Heart left ventricle (tissue), 16 donors: ENCODE measurements at regions of chr1 and their contacts with region 1.

Region 1: DNA sequence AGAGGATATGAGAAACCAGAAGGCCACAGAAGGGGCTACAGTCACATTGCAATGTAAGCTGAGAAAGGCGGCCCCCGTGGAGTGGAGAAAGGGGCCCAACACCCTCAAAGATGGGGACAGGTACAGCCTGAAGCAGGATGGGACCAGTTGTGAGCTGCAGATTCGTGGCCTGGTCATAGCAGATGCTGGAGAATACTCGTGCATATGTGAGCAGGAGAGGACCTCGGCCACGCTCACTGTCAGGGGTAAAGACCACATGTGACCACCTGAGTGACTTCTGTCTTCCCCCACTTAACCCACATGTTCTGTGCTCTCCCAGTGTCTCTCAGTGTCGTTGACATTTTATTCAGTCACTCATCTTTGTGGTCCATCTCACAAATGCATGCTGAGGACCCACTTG is 92.1 kb downstream of the OBSCN start:
- DNase-seq: peak in 3 of 5 donors; percentile 3 to 13 (median 4)
- ATAC-seq: no peak
- H3K4me3 ChIP-seq: no peak overlapping the region
- H3K27ac ChIP-seq: no peak overlapping the region
- H3K4me1 ChIP-seq: no peaks in the 10 kb centered on the region
- H3K27me3 ChIP-seq: no peaks in the 10 kb centered on the region
- CTCF ChIP-seq: no peak
- POLR2A ChIP-seq: no peak

Region 2: GRCh38 chr1:228241259-228241658 is 58.6 kb before region 1 on chr1:
- intact Hi-C with region 1: loop called in 1 of 10 experiments (anchors 2 kb)
- DNase-seq: no peak
- ATAC-seq: peak in 1 of 4 donors; percentile 10
- H3K4me3 ChIP-seq: no peak overlapping the region
- H3K27ac ChIP-seq: no peak overlapping the region
- H3K4me1 ChIP-seq: peaks cover 0 to 20% (median 0%) of the 10 kb centered on the region in 12 donors
- H3K27me3 ChIP-seq: no peaks in the 10 kb centered on the region
- CTCF ChIP-seq: no peak
- POLR2A ChIP-seq: no peak

Region 3: GRCh38 chr1:228393248-228393699 is 93.4 kb after region 1 on chr1:
- intact Hi-C with region 1: no loop called
- DNase-seq: peak in 4 of 5 donors; percentile 56 to 73 (median 69)
- ATAC-seq: peak; percentile 82 to 90 (median 86)
- H3K4me3 ChIP-seq: no peak overlapping the region
- H3K27ac ChIP-seq: peak overlapping the region in 7 of 12 donors; percentile 27 to 60 (median 50)
- H3K4me1 ChIP-seq: peaks cover 0 to 17% (median 10%) of the 10 kb centered on the region in 12 donors
- H3K27me3 ChIP-seq: no peaks in the 10 kb centered on the region
- CTCF ChIP-seq: peak; percentile 32 to 68 (median 54)
- POLR2A ChIP-seq: no peak

Region 4: DNA sequence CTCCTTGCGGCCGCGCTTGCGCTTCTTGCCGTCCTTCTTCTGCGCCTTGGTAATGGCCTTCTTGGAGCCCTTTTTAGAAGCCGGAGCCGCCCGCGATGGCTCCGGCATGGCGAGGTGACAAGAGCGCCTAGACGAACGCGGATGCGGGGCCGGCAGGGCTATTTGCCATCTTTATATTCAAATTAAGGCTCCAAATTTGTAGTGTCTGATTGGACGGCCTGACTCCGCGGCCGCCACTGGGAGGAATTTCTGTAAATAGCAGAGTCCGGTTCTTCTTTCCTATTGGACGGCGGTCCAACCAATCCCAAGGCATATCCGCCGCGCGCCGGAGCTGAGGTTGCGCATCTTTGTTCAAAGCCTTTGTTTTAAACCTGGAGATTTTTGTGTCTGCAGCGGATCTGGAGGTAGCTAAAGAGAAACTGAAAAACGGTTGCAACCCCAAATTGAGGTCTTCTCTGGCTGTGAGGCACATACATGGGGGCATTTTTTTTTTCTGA is 164.6 kb after region 1 on chr1:
- intact Hi-C with region 1: no loop called
- DNase-seq: peak; percentile 62 to 76 (median 72)
- ATAC-seq: peak; percentile 81 to 93 (median 90)
- H3K4me3 ChIP-seq: peak overlapping the region in 9 of 12 donors; percentile 29 to 51 (median 37)
- H3K27ac ChIP-seq: no peak overlapping the region
- H3K4me1 ChIP-seq: peaks cover 0 to 28% (median 7%) of the 10 kb centered on the region in 12 donors
- H3K27me3 ChIP-seq: peaks cover 16 to 90% (median 73%) of the 10 kb centered on the region in 9 donors
- CTCF ChIP-seq: no peak
- POLR2A ChIP-seq: no peak